CD8-positive, alpha-beta T cell (primary cell): ENCODE measurements at regions of chr5 and their contacts with region 1.

Region 1: DNA sequence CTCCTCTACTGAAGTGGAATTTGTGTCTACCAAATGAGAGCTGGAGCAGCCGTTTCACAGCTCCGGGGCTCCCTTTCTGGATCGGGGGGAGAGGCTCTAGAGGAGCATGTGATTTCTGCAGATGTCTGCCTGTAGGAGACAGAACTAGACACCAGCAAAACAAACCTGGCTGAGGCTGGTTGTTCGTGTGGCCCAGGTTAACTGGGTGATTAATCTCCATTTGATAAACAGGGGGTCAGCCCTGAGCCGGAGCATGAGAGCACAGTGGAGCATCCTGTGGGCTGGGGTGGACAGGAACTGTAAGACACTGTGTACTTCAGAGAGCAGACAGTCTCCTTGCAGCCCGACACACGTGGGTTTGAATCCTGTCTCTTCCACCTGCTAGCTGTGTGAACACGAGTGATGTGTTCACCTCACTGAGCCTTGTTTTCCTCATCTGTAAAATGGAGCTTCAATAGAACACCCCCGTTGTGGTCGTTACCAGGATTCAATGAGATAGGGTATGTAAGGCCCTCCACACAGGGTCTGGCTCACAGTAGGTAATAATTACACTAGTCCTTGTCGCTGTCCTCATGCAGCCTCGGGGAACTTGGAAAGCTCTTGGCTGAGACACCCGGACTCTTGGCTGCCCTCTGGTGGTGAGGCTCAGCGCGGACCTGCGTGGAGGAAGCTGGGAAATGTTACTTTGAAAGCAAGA is 12.9 kb downstream of the CXCL14 start:
- DNase-seq: peak; percentile 32 to 70 (median 61)
- ATAC-seq: peak; percentile 46
- H3K4me3 ChIP-seq: no peak overlapping the region
- H3K4me3 Mint-ChIP-seq: no peak overlapping the region
- H3K27ac ChIP-seq: no peak overlapping the region
- H3K27ac Mint-ChIP-seq: no peak overlapping the region
- H3K4me1 ChIP-seq: no peaks in the 10 kb centered on the region
- H3K4me1 Mint-ChIP-seq: peaks cover 1% of the 10 kb centered on the region
- H3K27me3 ChIP-seq: no peaks in the 10 kb centered on the region
- H3K27me3 Mint-ChIP-seq: peaks cover 3% of the 10 kb centered on the region
- CTCF ChIP-seq: peak; percentile 52

Region 2: GRCh38 chr5:135457424-135458071 is 108.3 kb before region 1 on chr5:
- CTCF ChIA-PET with region 1: interaction called, 92 read pairs
- POLR2A ChIA-PET with region 1: no interaction called
- intact Hi-C with region 1: loop called (anchors 1 kb)
- DNase-seq: peak; percentile 25 to 62 (median 51)
- ATAC-seq: peak; percentile 53
- H3K4me3 ChIP-seq: no peak overlapping the region
- H3K4me3 Mint-ChIP-seq: no peak overlapping the region
- H3K27ac ChIP-seq: no peak overlapping the region
- H3K27ac Mint-ChIP-seq: no peak overlapping the region
- H3K4me1 ChIP-seq: no peaks in the 10 kb centered on the region
- H3K4me1 Mint-ChIP-seq: peaks cover 2% of the 10 kb centered on the region
- H3K27me3 ChIP-seq: no peaks in the 10 kb centered on the region
- H3K27me3 Mint-ChIP-seq: peaks cover 17% of the 10 kb centered on the region
- CTCF ChIP-seq: peak; percentile 78

Region 3: GRCh38 chr5:135578685-135579341 is 12.9 kb after region 1 on chr5 and contains the start of gene CXCL14:
- CTCF ChIA-PET with region 1: interaction called, 25 read pairs
- POLR2A ChIA-PET with region 1: no interaction called
- intact Hi-C with region 1: no loop called
- DNase-seq: no peak
- ATAC-seq: no peak
- H3K4me3 ChIP-seq: no peak within 1 kb of the TSS
- H3K4me3 Mint-ChIP-seq: no peak within 1 kb of the TSS
- H3K27ac ChIP-seq: no peak within 1 kb of the TSS
- H3K27ac Mint-ChIP-seq: no peak within 1 kb of the TSS
- H3K4me1 ChIP-seq: no peaks in the 10 kb centered on the region
- H3K4me1 Mint-ChIP-seq: no peaks in the 10 kb centered on the region
- H3K27me3 ChIP-seq: no peaks in the 10 kb centered on the region
- H3K27me3 Mint-ChIP-seq: peaks cover 49% of the 10 kb centered on the region
- CTCF ChIP-seq: no peak
- total RNA-seq, gene CXCL14: not detected

Region 4: DNA sequence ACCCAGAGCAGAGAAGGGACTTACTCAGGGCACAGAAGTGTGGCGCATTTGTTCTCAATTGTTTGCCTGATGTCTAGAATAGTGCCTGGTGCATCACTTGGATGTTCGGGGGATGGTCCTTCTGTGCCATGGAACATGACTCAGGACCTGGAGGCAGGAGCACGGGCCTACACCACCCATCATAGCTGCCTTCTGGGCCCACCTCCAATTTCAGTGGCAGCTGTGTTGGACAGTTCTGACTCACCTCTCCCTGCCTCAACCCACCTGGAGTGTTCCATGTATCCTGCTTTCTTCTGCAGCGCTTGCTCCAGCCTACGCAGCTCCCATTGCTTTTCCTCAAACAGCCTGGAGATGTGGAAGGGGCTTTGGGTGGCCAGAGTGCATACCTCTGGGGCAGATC is 25.4 kb after region 1 on chr5:
- CTCF ChIA-PET with region 1: interaction called, 11 read pairs
- POLR2A ChIA-PET with region 1: no interaction called
- intact Hi-C with region 1: no loop called
- DNase-seq: no peak
- ATAC-seq: no peak
- H3K4me3 ChIP-seq: no peak overlapping the region
- H3K4me3 Mint-ChIP-seq: no peak overlapping the region
- H3K27ac ChIP-seq: no peak overlapping the region
- H3K27ac Mint-ChIP-seq: no peak overlapping the region
- H3K4me1 ChIP-seq: no peaks in the 10 kb centered on the region
- H3K4me1 Mint-ChIP-seq: no peaks in the 10 kb centered on the region
- H3K27me3 ChIP-seq: no peaks in the 10 kb centered on the region
- H3K27me3 Mint-ChIP-seq: peaks cover 8% of the 10 kb centered on the region
- CTCF ChIP-seq: no peak

Region 5: DNA sequence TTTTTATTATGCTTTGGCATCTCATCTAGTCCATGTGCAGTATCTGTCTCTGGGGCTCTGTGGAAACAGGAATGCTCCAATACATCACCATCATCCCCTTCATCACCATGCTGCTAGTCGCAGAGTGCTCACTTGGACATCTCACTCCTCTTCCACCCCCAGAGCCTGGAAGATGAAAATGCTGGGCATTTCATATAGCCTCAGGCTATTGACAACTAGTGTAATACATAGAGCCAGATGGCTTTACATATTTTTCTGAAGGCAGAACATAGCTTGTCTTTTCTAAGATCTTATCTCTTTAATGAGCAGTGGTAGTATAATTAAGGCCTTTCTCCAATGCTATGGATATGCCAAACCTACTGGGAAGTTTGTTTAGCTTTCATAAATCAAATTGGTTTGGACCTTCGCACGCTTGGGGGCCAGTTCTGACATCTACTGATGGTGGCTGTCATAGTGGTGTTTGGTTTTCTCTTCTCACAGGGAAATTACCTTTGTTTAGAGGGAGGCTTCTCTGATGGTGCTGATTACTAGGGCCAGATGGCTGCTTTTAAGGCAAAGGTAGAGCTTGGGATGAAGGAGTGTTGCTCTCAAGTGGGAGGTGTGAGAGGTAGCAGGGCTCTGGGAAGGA is 76.0 kb after region 1 on chr5:
- CTCF ChIA-PET with region 1: no interaction called
- POLR2A ChIA-PET with region 1: no interaction called
- intact Hi-C with region 1: no loop called
- DNase-seq: no peak
- ATAC-seq: no peak
- H3K4me3 ChIP-seq: no peak overlapping the region
- H3K4me3 Mint-ChIP-seq: no peak overlapping the region
- H3K27ac ChIP-seq: no peak overlapping the region
- H3K27ac Mint-ChIP-seq: no peak overlapping the region
- H3K4me1 ChIP-seq: no peaks in the 10 kb centered on the region
- H3K4me1 Mint-ChIP-seq: no peaks in the 10 kb centered on the region
- H3K27me3 ChIP-seq: no peaks in the 10 kb centered on the region
- H3K27me3 Mint-ChIP-seq: no peaks in the 10 kb centered on the region
- CTCF ChIP-seq: no peak